Psoas muscle (tissue), 8 donors: ENCODE measurements at regions of chr13 and their contacts with region 1.

Region 1: GRCh38 chr13:32581177-32581786 is 5.0 kb upstream of the PDS5B start:
- DNase-seq: no peak
- ATAC-seq: no peak
- H3K4me3 ChIP-seq: no peak overlapping the region
- H3K27ac ChIP-seq: no peak overlapping the region
- H3K4me1 ChIP-seq: no peaks in the 10 kb centered on the region
- H3K27me3 ChIP-seq: no peaks in the 10 kb centered on the region
- CTCF ChIP-seq: peak; percentile 46

Region 2: GRCh38 chr13:32381539-32381938 is 199.7 kb before region 1 on chr13:
- intact Hi-C with region 1: loop called (anchors 1 to 5 kb)
- DNase-seq: no peak
- ATAC-seq: peak in 2 of 4 donors; percentile 45 to 71
- H3K4me3 ChIP-seq: no peak overlapping the region
- H3K27ac ChIP-seq: no peak overlapping the region
- H3K4me1 ChIP-seq: no peaks in the 10 kb centered on the region
- H3K27me3 ChIP-seq: no peaks in the 10 kb centered on the region
- CTCF ChIP-seq: peak; percentile 56